ENCODE measurements at regions of chr6 and their contacts with region 1.

Region 1: GRCh38 chr6:74991573-74992332 is 214.1 kb downstream of the COL12A1 start:
- DNase-seq: peak; percentile 92
- H3K4me3 ChIP-seq: no peak overlapping the region
- H3K27ac ChIP-seq: peak overlapping the region; percentile 93
- H3K4me1 ChIP-seq: peaks cover 25% of the 10 kb centered on the region
- H3K27me3 ChIP-seq: no peaks in the 10 kb centered on the region
- CTCF ChIP-seq: peak in 1 of 2 donors; percentile 39

Region 2: DNA sequence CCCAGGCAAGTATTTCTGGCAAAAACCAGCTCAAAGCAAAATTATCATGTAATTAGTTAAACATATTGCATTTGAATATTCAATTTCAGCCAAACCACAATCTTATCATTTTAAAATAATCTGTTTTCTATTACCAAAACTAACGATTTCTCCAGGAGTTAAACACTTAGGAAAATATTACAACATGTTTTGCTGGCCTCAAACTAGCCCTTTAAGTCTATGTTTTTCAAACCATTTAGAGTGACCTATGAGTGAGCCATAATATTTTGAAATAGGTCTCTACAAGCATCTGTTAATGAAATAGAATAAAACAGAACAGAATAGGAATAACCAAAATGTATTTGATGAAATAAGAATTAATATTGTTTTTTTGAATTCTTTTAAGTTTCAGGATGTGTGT is 156.8 kb before region 1 on chr6:
- CTCF ChIA-PET with region 1: no interaction called
- dilution Hi-C with region 1: no loop called
- in situ Hi-C with region 1: no loop called
- intact Hi-C with region 1: no loop called
- DNase-seq: no peak
- H3K4me3 ChIP-seq: no peak overlapping the region
- H3K27ac ChIP-seq: no peak overlapping the region
- H3K4me1 ChIP-seq: no peaks in the 10 kb centered on the region
- H3K27me3 ChIP-seq: no peaks in the 10 kb centered on the region
- CTCF ChIP-seq: no peak

Region 3: DNA sequence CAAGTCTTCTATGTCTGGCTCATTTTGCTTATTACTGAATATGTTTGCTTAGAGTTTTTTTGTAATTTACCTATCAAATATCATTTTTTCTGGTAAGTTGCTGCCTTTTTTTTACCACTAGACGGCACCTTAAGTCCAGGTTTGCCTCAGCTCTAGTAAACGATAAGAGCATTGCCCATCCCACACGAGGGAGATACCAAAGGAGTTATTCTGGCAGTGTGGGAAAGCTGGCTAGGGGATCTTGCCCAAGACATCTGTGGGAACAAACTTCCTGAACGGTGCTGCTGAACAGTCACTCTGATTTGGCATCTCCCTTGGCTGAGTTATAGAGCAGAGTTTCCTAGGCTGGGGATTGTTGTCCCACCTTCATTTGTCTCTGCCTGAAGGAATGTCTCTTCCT is 92.3 kb before region 1 on chr6:
- CTCF ChIA-PET with region 1: interaction called, 3 read pairs
- dilution Hi-C with region 1: no loop called
- in situ Hi-C with region 1: no loop called
- intact Hi-C with region 1: loop called (anchors 1 kb)
- DNase-seq: peak; percentile 79
- H3K4me3 ChIP-seq: no peak overlapping the region
- H3K27ac ChIP-seq: peak overlapping the region; percentile 31
- H3K4me1 ChIP-seq: peaks cover 10% of the 10 kb centered on the region
- H3K27me3 ChIP-seq: no peaks in the 10 kb centered on the region
- CTCF ChIP-seq: peak; percentile 83 to 95

Region 4: GRCh38 chr6:74939151-74939708 is 52.5 kb before region 1 on chr6:
- CTCF ChIA-PET with region 1: no interaction called
- dilution Hi-C with region 1: no loop called
- in situ Hi-C with region 1: no loop called
- intact Hi-C with region 1: loop called (anchors 1 kb)
- DNase-seq: peak; percentile 39
- H3K4me3 ChIP-seq: no peak overlapping the region
- H3K27ac ChIP-seq: no peak overlapping the region
- H3K4me1 ChIP-seq: peaks cover 18% of the 10 kb centered on the region
- H3K27me3 ChIP-seq: no peaks in the 10 kb centered on the region
- CTCF ChIP-seq: peak in 1 of 2 donors; percentile 41

Region 5: DNA sequence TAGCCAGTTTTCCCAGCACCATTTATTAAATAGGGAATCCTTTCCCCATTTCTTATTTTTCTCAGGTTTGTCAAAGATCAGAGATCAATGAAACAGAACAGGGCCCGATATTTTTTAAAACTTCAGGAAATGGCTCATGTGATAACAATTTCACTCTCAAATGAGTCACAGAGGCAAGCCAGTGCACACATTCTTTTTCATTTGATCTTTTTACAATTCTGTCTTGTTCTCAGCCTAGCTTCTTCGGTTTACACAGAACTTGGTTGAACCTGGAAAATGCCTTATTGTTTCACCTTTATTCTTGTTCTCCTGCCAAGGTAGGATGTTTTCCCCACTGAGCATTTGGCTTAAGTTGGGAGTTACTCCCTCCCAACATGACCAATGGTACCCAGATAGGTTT is 44.8 kb before region 1 on chr6:
- CTCF ChIA-PET with region 1: interaction called, 3 read pairs
- dilution Hi-C with region 1: no loop called
- in situ Hi-C with region 1: no loop called
- intact Hi-C with region 1: loop called (anchors 2 kb)
- DNase-seq: peak; percentile 82
- H3K4me3 ChIP-seq: peak overlapping the region in 2 of 3 experiments; percentile 17
- H3K27ac ChIP-seq: peak overlapping the region; percentile 87
- H3K4me1 ChIP-seq: peaks cover 20% of the 10 kb centered on the region
- H3K27me3 ChIP-seq: no peaks in the 10 kb centered on the region
- CTCF ChIP-seq: no peak

Region 6: DNA sequence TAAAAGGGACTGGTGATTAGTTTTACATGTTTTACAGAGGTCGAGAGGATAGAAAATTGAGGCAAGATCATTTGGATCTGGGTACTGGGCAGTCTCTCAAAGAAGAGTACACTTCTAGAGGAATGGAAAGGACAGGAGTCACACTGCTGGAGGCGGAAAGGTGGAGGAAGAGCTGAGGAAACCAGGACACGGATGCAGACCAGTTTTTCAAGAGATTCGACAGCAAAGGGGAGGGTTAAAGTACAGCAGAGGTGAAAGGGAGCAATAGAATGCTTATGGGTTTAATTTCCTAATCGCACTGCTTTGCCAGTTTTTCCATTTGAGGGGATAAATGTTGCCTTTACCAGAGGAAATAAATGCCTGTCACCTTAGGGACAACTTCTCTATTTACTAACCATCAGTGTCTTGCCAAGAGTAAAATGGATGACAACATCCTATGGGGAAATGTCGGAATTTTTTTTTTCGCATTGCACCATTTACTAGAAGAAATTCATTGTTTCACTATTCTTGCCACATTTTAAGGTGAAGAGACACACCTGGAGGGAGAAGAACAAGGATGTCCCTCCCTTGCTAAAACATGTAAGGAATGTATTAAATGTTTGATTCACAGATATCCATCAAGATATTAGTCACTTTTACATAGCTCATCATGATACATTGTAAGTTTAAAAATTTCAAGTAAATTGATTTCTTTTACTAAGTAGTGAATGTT is 12.5 kb before region 1 on chr6:
- CTCF ChIA-PET with region 1: interaction called, 10 read pairs
- dilution Hi-C with region 1: no loop called
- in situ Hi-C with region 1: no loop called
- intact Hi-C with region 1: loop called (anchors 1 kb)
- DNase-seq: peak; percentile 96
- H3K4me3 ChIP-seq: no peak overlapping the region
- H3K27ac ChIP-seq: peak overlapping the region; percentile 99
- H3K4me1 ChIP-seq: peaks cover 29% of the 10 kb centered on the region
- H3K27me3 ChIP-seq: no peaks in the 10 kb centered on the region
- CTCF ChIP-seq: no peak

Measured in mammary epithelial cell (primary cell).